ENCODE measurements at regions of chr4 and their contacts with region 1.

Region 1: GRCh38 chr4:102430461-102430910 is 70.7 kb upstream of the NFKB1 start:
- DNase-seq: no peak
- ATAC-seq: no peak
- H3K4me3 Mint-ChIP-seq: peak overlapping the region; percentile 75
- H3K27ac Mint-ChIP-seq: peak overlapping the region; percentile 67
- H3K4me1 Mint-ChIP-seq: peaks cover 15% of the 10 kb centered on the region
- H3K27me3 Mint-ChIP-seq: no peaks in the 10 kb centered on the region
- CTCF ChIP-seq: no peak

Region 2: DNA sequence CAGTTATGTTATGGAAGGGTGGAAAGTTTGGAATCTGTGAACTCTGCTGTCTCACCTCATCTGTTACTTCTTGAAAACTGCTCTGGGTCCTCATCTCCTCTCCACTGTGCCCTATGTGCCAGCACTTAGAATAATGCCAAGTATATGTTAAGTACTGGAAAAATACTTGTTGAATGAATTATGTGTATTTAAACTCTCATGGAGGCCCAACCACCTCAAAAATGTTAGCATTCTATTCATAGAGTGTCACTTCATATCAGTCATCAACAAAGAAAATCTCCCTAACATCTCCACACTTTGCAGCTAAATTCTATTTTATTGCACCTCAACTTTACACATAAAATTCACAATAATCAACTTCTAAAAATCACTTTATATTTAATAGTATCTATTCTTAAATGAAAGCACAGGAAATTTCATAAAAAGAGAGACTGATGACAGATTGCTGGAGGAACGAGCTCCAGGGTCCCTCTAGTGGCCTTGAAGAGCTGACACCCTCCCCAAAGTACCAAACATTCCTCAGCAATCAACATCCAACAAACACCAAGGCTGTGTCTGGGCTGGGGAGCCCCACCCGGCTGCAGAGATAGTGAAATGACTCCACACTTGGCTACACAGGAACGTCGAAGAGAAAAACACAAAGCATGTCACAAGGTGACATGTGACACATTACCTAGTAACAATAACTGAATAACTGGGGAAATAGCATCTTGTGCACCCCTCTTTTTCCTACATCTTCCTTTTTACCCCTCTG is 131.0 kb before region 1 on chr4:
- CTCF ChIA-PET with region 1: interaction called, 10 read pairs
- POLR2A ChIA-PET with region 1: no interaction called
- DNase-seq: peak; percentile 53
- ATAC-seq: peak; percentile 100
- H3K4me3 Mint-ChIP-seq: no peak overlapping the region
- H3K27ac Mint-ChIP-seq: peak overlapping the region; percentile 69; the same call in 1 of the 2 replicates
- H3K4me1 Mint-ChIP-seq: peaks cover 34% of the 10 kb centered on the region
- H3K27me3 Mint-ChIP-seq: no peaks in the 10 kb centered on the region
- CTCF ChIP-seq: peak; percentile 59

Region 3: GRCh38 chr4:102344954-102345794 is 85.3 kb before region 1 on chr4 and contains the start of gene SLC39A8:
- CTCF ChIA-PET with region 1: interaction called, 34 read pairs
- POLR2A ChIA-PET with region 1: interaction called, 4 read pairs
- DNase-seq: peak; percentile 89
- ATAC-seq: peak; percentile 82
- H3K4me3 Mint-ChIP-seq: peak within 1 kb of the TSS; percentile 84
- H3K27ac Mint-ChIP-seq: peak within 1 kb of the TSS; percentile 91
- H3K4me1 Mint-ChIP-seq: peaks cover 50% of the 10 kb centered on the region
- H3K27me3 Mint-ChIP-seq: peaks cover 17% of the 10 kb centered on the region
- CTCF ChIP-seq: peak; percentile 40; the same call in 1 of the 2 replicates
- total RNA-seq, gene SLC39A8: 35.1 to 40.0 TPM (median 35.9 TPM) in 3 replicates

Region 4: GRCh38 chr4:102411416-102411815 is 19.1 kb before region 1 on chr4:
- CTCF ChIA-PET with region 1: interaction called, 12 read pairs
- POLR2A ChIA-PET with region 1: no interaction called
- DNase-seq: no peak
- ATAC-seq: no peak
- H3K4me3 Mint-ChIP-seq: no peak overlapping the region
- H3K27ac Mint-ChIP-seq: no peak overlapping the region
- H3K4me1 Mint-ChIP-seq: peaks cover 6% of the 10 kb centered on the region
- H3K27me3 Mint-ChIP-seq: no peaks in the 10 kb centered on the region
- CTCF ChIP-seq: no peak

Region 5: GRCh38 chr4:102449751-102450352 is 19.4 kb after region 1 on chr4:
- CTCF ChIA-PET with region 1: interaction called, 16 read pairs
- POLR2A ChIA-PET with region 1: no interaction called
- DNase-seq: peak; percentile 18
- ATAC-seq: peak; percentile 80
- H3K4me3 Mint-ChIP-seq: no peak overlapping the region
- H3K27ac Mint-ChIP-seq: no peak overlapping the region
- H3K4me1 Mint-ChIP-seq: peaks cover 22% of the 10 kb centered on the region
- H3K27me3 Mint-ChIP-seq: no peaks in the 10 kb centered on the region
- CTCF ChIP-seq: no peak

Region 6: GRCh38 chr4:102586644-102587021 is 156.1 kb after region 1 on chr4:
- CTCF ChIA-PET with region 1: no interaction called
- POLR2A ChIA-PET with region 1: no interaction called
- DNase-seq: no peak
- ATAC-seq: no peak
- H3K4me3 Mint-ChIP-seq: no peak overlapping the region
- H3K27ac Mint-ChIP-seq: no peak overlapping the region
- H3K4me1 Mint-ChIP-seq: no peaks in the 10 kb centered on the region
- H3K27me3 Mint-ChIP-seq: no peaks in the 10 kb centered on the region
- CTCF ChIP-seq: no peak

Region 7: GRCh38 chr4:103008875-103009729 is 578.6 kb after region 1 on chr4:
- CTCF ChIA-PET with region 1: interaction called, 10 read pairs
- POLR2A ChIA-PET with region 1: no interaction called
- DNase-seq: no peak
- ATAC-seq: peak; percentile 92
- H3K4me3 Mint-ChIP-seq: no peak overlapping the region
- H3K27ac Mint-ChIP-seq: no peak overlapping the region
- H3K4me1 Mint-ChIP-seq: no peaks in the 10 kb centered on the region
- H3K27me3 Mint-ChIP-seq: no peaks in the 10 kb centered on the region; the same call in 1 of the 2 replicates
- CTCF ChIP-seq: peak; percentile 32

Region 8: DNA sequence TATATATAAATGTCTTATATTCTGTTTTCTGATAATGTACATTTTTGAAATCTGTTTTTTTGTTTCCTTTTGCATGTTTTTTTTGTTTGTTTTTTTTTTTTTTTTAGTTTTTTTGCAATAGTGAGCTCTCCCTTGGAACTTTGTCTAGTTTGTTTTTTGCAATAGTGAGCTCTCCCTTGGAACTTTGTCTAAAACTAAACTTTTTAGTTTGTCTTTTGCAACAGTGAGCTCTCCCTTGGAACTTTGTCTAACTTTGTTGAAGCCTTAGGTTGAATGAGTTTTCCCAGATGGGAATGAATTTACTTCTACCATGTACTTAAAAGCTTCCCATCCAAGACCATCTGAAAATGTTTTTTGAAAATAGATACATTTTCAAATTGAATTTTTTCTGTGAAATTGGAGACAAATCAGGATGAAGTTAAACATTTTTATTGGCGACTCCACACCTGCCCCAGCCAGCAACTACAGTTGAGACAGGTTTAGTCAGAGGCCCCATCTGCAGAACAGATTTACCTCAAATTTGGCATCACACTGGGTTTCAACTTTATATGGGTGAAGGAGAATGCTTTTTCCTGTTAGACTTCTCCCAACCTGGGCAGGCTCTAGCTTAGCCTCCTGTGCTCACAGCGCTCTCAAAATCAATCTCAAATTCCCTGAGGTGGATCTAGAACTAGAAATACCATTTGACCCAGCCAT is 630.1 kb after region 1 on chr4:
- CTCF ChIA-PET with region 1: no interaction called
- POLR2A ChIA-PET with region 1: no interaction called
- DNase-seq: no peak
- ATAC-seq: no peak
- H3K4me3 Mint-ChIP-seq: no peak overlapping the region
- H3K27ac Mint-ChIP-seq: no peak overlapping the region
- H3K4me1 Mint-ChIP-seq: no peaks in the 10 kb centered on the region
- H3K27me3 Mint-ChIP-seq: no peaks in the 10 kb centered on the region; the same call in 1 of the 2 replicates
- CTCF ChIP-seq: no peak